ENCODE measurements at regions of chr5 and their contacts with region 1.

Region 1: DNA sequence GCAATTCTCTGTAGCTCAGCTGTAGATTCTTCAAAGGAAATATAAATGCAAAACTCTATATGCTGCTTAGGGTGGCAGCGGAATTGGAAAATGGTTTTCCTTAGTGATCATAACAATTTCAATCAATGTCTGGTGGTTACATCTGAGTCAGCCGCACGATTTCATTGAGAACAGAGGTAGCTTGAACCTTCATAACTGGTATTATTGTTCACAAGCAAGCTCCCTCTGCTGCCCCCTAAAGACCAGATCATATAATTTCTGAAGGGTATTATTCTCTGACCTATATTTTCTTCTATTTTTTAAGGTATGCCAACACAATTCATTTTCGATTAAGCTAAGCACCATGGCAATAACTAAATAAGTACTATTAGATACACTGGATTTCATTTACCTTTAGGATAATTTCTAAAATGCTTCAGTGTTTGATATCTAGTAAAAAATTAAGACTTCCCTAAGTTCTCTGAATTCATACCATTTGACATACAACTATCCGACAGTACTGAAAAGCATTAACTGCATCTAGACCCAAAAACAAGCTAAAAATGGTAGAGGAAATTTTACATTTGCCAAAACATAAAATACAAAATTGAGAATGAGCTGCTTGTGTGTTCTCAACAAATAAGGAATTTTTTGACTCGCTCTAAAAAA is 181.1 kb upstream of the SPEF2 start:
- H3K4me3 ChIP-seq: no peak overlapping the region
- H3K27ac ChIP-seq: no peak overlapping the region
- H3K4me1 ChIP-seq: no peaks in the 10 kb centered on the region
- CTCF ChIP-seq: no peak

Region 2: DNA sequence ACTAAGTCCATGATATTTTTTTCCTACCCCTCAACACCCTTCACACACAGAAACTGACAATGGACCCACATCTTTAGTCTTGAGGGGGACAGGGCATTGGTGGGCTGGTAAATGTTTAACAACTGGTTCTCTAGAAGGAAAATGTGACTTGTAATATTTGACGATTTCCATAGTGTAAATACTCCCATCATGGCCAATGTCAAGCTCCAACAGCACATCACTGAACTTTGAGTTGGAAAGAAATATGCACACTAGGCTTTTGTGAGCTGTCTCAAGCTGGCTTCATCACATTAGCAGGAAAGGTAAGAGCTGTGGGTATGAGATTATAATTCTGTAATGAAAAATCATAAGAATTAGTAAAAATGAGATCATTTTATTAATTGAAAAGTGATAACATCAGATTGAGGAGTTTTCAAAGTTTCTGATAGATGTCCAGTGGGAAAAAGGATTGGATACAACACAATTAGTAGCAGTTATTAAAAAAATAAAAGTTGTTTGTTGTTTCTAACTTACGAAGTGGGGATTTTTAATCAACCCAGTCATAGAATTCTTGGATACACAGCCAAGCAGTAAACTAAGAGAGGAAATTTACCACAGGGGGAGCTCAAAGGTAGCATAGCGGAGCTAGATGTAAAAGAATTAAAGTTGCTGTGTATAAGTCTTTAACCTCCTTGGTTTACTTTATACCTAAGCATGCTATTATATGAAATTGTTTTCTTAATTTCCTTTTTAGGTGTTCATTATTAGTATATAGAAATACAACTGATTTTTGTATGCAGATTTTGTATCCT is 16.1 kb before region 1 on chr5:
- CTCF ChIA-PET with region 1: interaction called, 22 read pairs
- POLR2A ChIA-PET with region 1: no interaction called
- H3K4me3 ChIP-seq: no peak overlapping the region
- H3K27ac ChIP-seq: no peak overlapping the region
- H3K4me1 ChIP-seq: no peaks in the 10 kb centered on the region
- CTCF ChIP-seq: no peak

Region 3: GRCh38 chr5:35454011-35454525 is 17.5 kb after region 1 on chr5:
- CTCF ChIA-PET with region 1: interaction called, 11 read pairs
- POLR2A ChIA-PET with region 1: no interaction called
- H3K4me3 ChIP-seq: no peak overlapping the region
- H3K27ac ChIP-seq: no peak overlapping the region
- H3K4me1 ChIP-seq: no peaks in the 10 kb centered on the region
- CTCF ChIP-seq: no peak

Measured in HEK293 (cell line).